A549 (cell line): ENCODE measurements at regions of chrX and their contacts with region 1.

Region 1: GRCh38 chrX:17046478-17047097 is 100.1 kb downstream of the REPS2 start:
- DNase-seq: peak; percentile 29 to 77
- ATAC-seq: peak; percentile 97 to 98
- H3K4me3 ChIP-seq: no peak overlapping the region
- H3K27ac ChIP-seq: no peak overlapping the region
- H3K4me1 ChIP-seq: no peaks in the 10 kb centered on the region
- CTCF ChIP-seq: peak; percentile 70
- EP300 ChIP-seq: no peak
- POLR2A ChIP-seq: no peak
- RAD21 ChIP-seq: peak; percentile 78 to 85

Region 2: DNA sequence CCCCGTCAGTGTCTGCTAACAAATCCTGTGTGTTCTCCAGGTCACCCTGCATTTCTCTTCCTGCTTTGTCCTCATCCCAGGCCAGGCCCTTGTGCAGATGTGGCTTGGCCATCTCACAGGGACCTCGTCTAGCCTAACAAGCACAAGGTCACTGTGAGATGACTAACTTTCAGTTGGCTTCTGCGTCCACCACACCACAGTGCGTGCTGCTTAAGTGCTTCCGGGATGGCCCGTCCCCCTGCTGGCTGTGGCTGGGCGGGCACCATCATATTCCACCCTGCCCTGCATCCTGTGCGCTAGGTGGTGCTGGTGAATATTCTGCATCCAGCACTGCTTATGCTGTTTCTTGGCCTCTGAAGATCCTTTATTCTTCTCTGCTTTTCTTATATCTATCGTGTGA is 210.2 kb before region 1 on chrX:
- CTCF ChIA-PET with region 1: interaction called, 11 read pairs
- POLR2A ChIA-PET with region 1: no interaction called
- DNase-seq: peak; percentile 57 to 62
- ATAC-seq: peak; percentile 94 to 95
- H3K4me3 ChIP-seq: no peak overlapping the region
- H3K27ac ChIP-seq: peak overlapping the region in 1 of 2 experiments; percentile 46; a peak in 1 of 6 replicates
- H3K4me1 ChIP-seq: peaks cover 30% of the 10 kb centered on the region
- CTCF ChIP-seq: 0 out of 3 replicates have a peak, but pooled peaks have one; percentile 19
- EP300 ChIP-seq: no peak
- POLR2A ChIP-seq: no peak
- RAD21 ChIP-seq: peak in 1 of 2 experiments; percentile 22; a peak in 1 of 5 replicates

Region 3: DNA sequence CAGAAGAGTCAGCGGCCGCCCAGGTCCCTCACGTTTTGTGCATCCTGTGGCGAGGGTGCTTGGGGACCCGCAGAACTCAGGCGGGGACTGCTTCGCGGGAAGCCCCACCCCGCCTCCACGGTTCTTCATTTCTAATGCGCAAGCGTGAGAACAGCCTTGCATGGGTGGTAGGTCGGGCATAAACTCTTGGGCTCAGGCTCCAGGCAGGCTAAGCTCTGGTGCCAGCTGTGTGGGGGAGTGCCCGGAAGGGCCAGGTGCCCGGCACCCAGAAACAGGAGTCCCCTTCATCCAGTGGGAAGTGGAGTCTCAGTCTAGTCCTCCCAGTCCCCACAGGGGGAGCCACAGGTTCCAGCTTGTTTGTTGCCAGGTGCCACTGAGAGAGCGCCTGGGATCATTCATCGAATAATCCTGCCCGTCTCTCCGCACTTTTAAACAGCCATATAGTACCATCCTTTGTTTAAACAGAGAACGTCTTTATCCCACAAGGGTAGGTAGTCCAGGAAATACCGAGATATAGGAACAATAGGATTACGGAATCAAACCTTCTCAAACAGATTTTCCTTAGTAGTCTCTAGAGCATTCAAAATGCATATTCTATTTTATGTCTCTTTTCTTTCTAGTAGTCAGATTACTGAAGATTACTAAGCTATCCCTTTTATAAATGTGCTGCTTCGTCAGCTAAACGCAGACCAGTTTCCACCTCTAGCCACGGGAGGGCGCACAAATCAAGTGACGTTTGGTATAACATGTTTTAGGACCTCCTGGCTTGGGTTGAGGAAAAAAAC is 163.7 kb before region 1 on chrX:
- CTCF ChIA-PET with region 1: interaction called, 161 read pairs
- POLR2A ChIA-PET with region 1: interaction called, 14 read pairs
- DNase-seq: peak; percentile 74
- ATAC-seq: peak; percentile 95 to 98
- H3K4me3 ChIP-seq: peak overlapping the region; percentile 50
- H3K27ac ChIP-seq: peak overlapping the region; percentile 73 to 86
- H3K4me1 ChIP-seq: no peaks in the 10 kb centered on the region
- CTCF ChIP-seq: peak; percentile 72
- EP300 ChIP-seq: no peak
- POLR2A ChIP-seq: peak; percentile 18; the same call in 1 of the 2 replicates
- RAD21 ChIP-seq: peak; percentile 53 to 57; a peak in 4 of 5 replicates

Region 4: DNA sequence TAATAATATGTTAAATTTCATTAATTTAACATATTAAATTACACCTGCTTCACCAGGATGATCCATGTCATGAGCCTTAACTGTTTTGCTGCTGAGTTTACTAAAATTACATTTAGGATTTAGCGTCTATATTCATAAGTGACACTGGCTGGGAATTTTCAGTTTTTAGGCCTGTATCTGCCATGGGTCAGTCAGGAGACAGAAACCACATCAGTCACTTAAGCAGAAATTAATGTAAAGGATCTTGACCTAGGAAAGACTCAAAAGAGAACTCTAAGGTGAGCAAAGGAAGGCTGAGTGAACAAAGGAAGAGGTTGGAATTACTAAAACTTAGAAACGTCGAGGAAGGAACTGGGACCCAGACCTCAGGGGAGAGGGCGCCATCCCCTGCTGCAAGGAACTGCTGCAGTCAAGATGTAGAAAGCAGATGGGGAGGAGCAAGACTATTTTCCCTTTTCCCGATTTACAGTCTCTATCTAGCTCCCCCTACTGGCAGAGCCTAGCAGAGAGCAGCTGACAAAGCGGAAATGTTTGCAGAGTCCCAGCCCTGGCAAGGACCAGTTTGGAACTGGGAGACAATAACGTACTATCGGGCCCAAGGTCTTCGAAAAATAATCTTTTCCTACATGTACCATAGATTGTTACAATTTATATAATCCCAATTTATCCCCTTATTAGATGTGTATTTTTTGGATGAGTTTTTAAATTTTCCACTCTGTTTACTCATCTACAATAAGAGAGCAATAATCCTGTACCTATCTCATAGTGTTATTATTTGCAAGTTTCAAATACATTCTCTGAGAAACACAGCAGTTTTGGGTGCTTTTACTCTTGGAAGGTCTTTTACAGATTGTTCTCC is 153.9 kb before region 1 on chrX:
- CTCF ChIA-PET with region 1: interaction called, 161 read pairs
- POLR2A ChIA-PET with region 1: no interaction called
- DNase-seq: peak; percentile 72 to 89
- ATAC-seq: peak; percentile 95 to 97
- H3K4me3 ChIP-seq: no peak overlapping the region
- H3K27ac ChIP-seq: peak overlapping the region; percentile 47 to 51; a peak in 2 of 6 replicates
- H3K4me1 ChIP-seq: 0 out of 3 replicates have a peak, but pooled peaks cover 3% of the 10 kb centered on the region
- CTCF ChIP-seq: peak; percentile 82
- EP300 ChIP-seq: no peak
- POLR2A ChIP-seq: no peak
- RAD21 ChIP-seq: peak; percentile 49 to 56

Region 5: DNA sequence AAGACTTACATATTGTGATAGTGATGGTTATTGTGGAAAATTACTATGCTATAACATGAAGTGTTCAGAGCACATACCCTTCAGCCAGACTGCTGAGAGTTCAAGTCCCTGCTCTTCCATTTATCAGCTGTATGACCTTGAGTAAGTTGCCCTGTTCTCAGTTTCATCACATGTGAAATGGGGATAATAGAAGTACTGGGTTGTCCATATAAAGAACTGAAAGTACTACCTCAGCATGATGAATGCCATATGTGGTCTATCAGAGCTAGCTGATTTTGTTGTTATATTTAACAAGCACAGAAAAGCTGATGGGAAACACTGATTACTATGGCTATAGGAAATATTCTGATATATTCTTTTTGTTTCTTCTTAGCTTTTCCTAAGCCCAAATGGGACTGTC is 15.5 kb after region 1 on chrX:
- CTCF ChIA-PET with region 1: interaction called, 12 read pairs
- POLR2A ChIA-PET with region 1: no interaction called
- DNase-seq: no peak
- ATAC-seq: no peak
- H3K4me3 ChIP-seq: no peak overlapping the region
- H3K27ac ChIP-seq: no peak overlapping the region
- H3K4me1 ChIP-seq: no peaks in the 10 kb centered on the region
- CTCF ChIP-seq: no peak
- EP300 ChIP-seq: no peak
- POLR2A ChIP-seq: no peak
- RAD21 ChIP-seq: no peak

Region 6: GRCh38 chrX:17082831-17083230 is 36.2 kb after region 1 on chrX:
- CTCF ChIA-PET with region 1: interaction called, 20 read pairs
- POLR2A ChIA-PET with region 1: no interaction called
- DNase-seq: peak; percentile 42 to 44
- ATAC-seq: peak; percentile 78 to 85; a peak in 4 of 6 replicates
- H3K4me3 ChIP-seq: no peak overlapping the region
- H3K27ac ChIP-seq: no peak overlapping the region
- H3K4me1 ChIP-seq: no peaks in the 10 kb centered on the region
- CTCF ChIP-seq: peak; percentile 36
- EP300 ChIP-seq: no peak
- POLR2A ChIP-seq: no peak
- RAD21 ChIP-seq: peak; percentile 31 to 43; a peak in 2 of 5 replicates

Region 7: DNA sequence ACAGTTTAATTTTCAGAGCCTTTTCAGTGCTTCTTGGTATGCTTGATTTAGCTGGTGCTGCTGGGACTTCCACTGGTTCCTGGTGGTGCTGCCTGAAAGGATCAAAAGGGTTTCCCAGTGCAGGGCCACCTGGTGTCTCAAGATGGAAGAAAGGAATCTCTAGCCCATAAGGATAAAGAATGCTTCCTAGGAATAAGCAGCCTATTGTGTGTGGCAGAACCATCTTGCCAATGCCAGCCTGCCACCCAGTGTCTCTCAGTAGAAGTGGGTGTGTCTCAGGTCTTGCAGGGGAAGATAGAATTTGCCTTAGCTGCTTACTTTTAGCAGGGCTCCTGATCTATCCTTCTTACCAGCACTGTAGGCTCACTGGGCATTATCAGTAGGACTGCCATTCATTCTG is 829.6 kb after region 1 on chrX:
- CTCF ChIA-PET with region 1: no interaction called
- POLR2A ChIA-PET with region 1: no interaction called
- DNase-seq: no peak
- ATAC-seq: no peak
- H3K4me3 ChIP-seq: no peak overlapping the region
- H3K27ac ChIP-seq: no peak overlapping the region
- H3K4me1 ChIP-seq: no peaks in the 10 kb centered on the region
- CTCF ChIP-seq: no peak
- EP300 ChIP-seq: no peak
- POLR2A ChIP-seq: no peak
- RAD21 ChIP-seq: no peak